Ovary (tissue), 10 donors: ENCODE measurements at regions of chr11 and their contacts with region 1.

Region 1: DNA sequence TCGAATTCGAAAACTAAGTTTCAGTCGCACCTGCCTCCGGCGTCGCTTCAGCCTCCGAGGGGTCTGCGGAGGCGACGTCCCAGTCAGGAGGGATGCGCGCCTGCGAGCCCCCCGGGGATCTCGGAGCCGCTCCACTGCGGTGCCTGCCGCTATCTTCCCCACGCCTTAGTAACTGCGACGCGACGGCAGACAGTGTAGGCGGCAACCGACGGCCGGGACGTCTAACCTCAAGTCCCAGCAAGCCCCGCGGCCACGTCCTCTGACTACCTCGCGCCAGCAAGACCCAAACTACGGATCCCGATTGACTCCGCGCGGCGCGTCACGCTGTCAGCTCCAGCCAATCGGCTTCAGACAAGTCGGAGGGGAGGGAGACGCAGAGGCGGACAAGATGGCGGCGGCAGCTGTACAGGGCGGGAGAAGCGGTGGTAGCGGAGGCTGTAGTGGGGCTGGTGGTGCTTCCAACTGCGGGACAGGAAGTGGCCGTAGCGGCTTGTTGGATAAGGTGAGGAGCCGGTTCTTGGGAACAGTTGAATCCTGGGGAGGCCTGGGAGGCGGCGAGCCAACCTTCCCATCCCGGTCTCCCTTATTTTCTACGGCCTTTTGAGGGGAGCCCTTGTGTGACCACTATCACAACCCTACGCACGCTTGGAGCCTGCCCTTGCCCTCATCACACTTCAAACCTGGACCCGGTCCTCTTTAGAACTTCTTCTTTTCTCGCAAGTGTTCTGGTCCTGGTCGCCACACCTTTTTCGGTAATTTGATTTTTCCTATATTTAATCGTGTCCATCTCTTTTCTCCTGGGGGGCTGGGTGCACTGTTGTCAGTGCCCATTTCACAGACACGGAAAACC is at the starts of genes SPCS2 and XRRA1:
- DNase-seq: peak; percentile 96 to 97 (median 97)
- H3K4me3 ChIP-seq: peak within 1 kb of the TSS; percentile 96
- H3K27ac ChIP-seq: peak within 1 kb of the TSS; percentile 51 to 58
- H3K4me1 ChIP-seq: peaks cover 5% of the 10 kb centered on the region
- H3K27me3 ChIP-seq: no peaks in the 10 kb centered on the region
- CTCF ChIP-seq: no peak
- EP300 ChIP-seq: no peak
- POLR2A ChIP-seq: peak; percentile 74
- total RNA-seq, gene SPCS2: 39.8 to 174 (median 125) TPM
- total RNA-seq, gene XRRA1: 8.2 to 31.1 (median 13.0) TPM

Region 2: GRCh38 chr11:74248469-74248868 is 700.7 kb before region 1 on chr11:
- intact Hi-C with region 1: no loop called
- DNase-seq: no peak
- H3K4me3 ChIP-seq: no peak overlapping the region
- H3K27ac ChIP-seq: no peak overlapping the region
- H3K4me1 ChIP-seq: no peaks in the 10 kb centered on the region
- H3K27me3 ChIP-seq: no peaks in the 10 kb centered on the region
- CTCF ChIP-seq: no peak
- EP300 ChIP-seq: no peak
- POLR2A ChIP-seq: no peak

Region 3: DNA sequence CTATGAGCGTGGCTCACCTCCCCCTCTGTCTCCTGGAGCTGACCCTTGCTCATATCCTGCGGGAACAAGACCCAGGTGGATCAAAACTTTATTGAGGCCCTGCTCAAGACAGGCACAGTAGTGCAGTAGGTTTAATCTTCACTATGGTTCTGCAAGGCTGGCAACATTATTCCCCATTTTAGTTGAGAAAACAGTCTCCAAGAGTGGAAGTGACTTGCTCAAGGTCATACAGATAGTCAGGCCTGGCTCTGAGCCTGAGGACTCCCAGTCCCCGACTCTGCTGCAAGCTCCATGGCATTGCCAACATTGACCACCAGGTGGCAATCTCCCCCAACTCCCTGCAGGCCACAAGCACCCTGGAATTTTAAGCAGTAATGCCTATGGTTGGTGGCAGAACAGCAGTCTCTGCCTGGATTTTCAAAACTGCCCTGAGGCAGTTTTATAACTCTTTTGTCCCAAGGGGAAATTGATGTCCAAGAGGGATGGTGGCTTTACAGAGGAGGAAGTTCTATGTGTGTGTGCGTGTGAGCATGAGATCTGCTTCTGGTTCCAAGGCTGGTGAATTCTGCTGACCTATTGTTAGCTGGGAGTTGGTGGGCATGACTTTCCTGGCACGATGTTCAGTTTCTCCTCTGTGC is 73.8 kb after region 1 on chr11:
- intact Hi-C with region 1: loop called in 1 of 4 experiments (anchors 10 kb)
- DNase-seq: peak; percentile 36 to 71 (median 56)
- H3K4me3 ChIP-seq: no peak overlapping the region
- H3K27ac ChIP-seq: no peak overlapping the region
- H3K4me1 ChIP-seq: no peaks in the 10 kb centered on the region
- H3K27me3 ChIP-seq: no peaks in the 10 kb centered on the region
- CTCF ChIP-seq: peak in 2 of 3 donors; percentile 41 to 55
- EP300 ChIP-seq: no peak
- POLR2A ChIP-seq: no peak